GM12878 (cell line): ENCODE measurements at regions of chr5 and their contacts with region 1.

Region 1: GRCh38 chr5:158875272-158875679 is 224.4 kb downstream of the EBF1 start:
- DNase-seq: no peak
- ATAC-seq: peak; percentile 54
- H3K4me3 ChIP-seq: no peak overlapping the region
- H3K27ac ChIP-seq: peak overlapping the region; percentile 71
- H3K4me1 ChIP-seq: peaks cover 55% of the 10 kb centered on the region
- H3K27me3 ChIP-seq: no peaks in the 10 kb centered on the region
- CTCF ChIP-seq: no peak
- EP300 ChIP-seq: peak; percentile 60 to 64; a peak in 2 of 4 replicates
- POLR2A ChIP-seq: no peak
- RAD21 ChIP-seq: no peak

Region 2: GRCh38 chr5:158770506-158770905 is 104.8 kb before region 1 on chr5:
- CTCF ChIA-PET with region 1: interaction called, 4 read pairs
- POLR2A ChIA-PET with region 1: interaction called, 5 read pairs
- RAD21 ChIA-PET with region 1: interaction called, 37 read pairs
- SMC1A ChIA-PET with region 1: interaction called, 36 read pairs
- in situ Hi-C with region 1: no loop called
- intact Hi-C with region 1: loop called (anchors 2 kb)
- DNase-seq: no peak
- ATAC-seq: no peak
- H3K4me3 ChIP-seq: no peak overlapping the region
- H3K27ac ChIP-seq: no peak overlapping the region
- H3K4me1 ChIP-seq: peaks cover 4% of the 10 kb centered on the region; the same call in 1 of the 2 replicates
- H3K27me3 ChIP-seq: no peaks in the 10 kb centered on the region
- CTCF ChIP-seq: peak in 2 of 3 experiments; percentile 17 to 38; a peak in 2 of 6 replicates
- EP300 ChIP-seq: no peak
- POLR2A ChIP-seq: no peak
- RAD21 ChIP-seq: 0 out of 2 replicates have a peak, but pooled peaks have one; percentile 15

Region 3: DNA sequence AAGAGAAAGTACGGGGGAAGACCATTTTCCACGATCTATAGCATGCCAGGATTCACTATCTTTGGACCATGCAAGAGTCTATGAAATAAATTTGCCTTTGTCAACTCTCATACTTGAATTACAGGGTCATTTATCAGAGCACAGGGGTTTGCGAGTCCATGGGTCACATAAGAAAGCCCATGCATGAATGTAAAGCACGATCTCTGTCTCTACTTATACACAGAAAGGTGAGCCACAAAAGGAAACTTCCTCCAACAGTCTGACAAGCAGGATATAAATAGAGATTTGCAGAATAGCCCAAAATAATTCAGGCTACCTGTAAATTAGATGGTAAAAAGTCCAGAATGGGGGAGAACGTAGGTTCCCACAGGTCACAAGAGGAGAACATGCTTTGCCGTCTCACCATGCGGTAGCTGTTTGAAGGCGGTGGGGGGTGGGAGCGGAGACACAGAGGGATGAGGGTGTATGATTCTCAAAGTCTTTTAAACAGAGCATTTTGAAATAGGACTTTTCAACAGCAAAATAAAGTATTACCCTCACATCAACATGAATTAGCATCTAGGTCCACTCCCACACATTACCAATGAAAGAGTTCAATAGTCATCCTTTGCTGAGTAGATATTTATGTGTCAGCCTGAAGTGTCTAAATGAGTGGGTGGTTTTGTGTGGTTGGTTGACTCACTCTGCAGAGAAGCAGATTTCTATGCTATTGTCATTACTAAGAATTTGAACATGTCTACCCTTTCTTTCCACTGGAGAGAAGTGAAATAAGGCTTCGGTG is 55.2 kb before region 1 on chr5:
- CTCF ChIA-PET with region 1: interaction called, 7 read pairs
- POLR2A ChIA-PET with region 1: interaction called, 9 read pairs
- RAD21 ChIA-PET with region 1: interaction called, 77 read pairs
- SMC1A ChIA-PET with region 1: interaction called, 65 read pairs
- in situ Hi-C with region 1: no loop called
- intact Hi-C with region 1: loop called (anchors 2 kb)
- DNase-seq: peak; percentile 77
- ATAC-seq: peak; percentile 90
- H3K4me3 ChIP-seq: peak overlapping the region; percentile 53
- H3K27ac ChIP-seq: peak overlapping the region; percentile 83
- H3K4me1 ChIP-seq: peaks cover 50% of the 10 kb centered on the region
- H3K27me3 ChIP-seq: no peaks in the 10 kb centered on the region
- CTCF ChIP-seq: no peak
- EP300 ChIP-seq: peak in 1 of 2 experiments; percentile 5; a peak in 1 of 4 replicates
- POLR2A ChIP-seq: no peak
- RAD21 ChIP-seq: peak; percentile 10; the same call in 1 of the 2 replicates

Region 4: GRCh38 chr5:158898185-158899177 is 23.2 kb after region 1 on chr5:
- CTCF ChIA-PET with region 1: interaction called, 9 read pairs
- POLR2A ChIA-PET with region 1: interaction called, 7 read pairs
- RAD21 ChIA-PET with region 1: interaction called, 41 read pairs
- SMC1A ChIA-PET with region 1: interaction called, 131 read pairs
- in situ Hi-C with region 1: no loop called
- intact Hi-C with region 1: no loop called
- DNase-seq: no peak
- ATAC-seq: peak; percentile 82
- H3K4me3 ChIP-seq: 0 out of 2 replicates have a peak overlapping the region, but pooled peaks have one; percentile 15
- H3K27ac ChIP-seq: peak overlapping the region; percentile 83
- H3K4me1 ChIP-seq: peaks cover 14% of the 10 kb centered on the region
- H3K27me3 ChIP-seq: no peaks in the 10 kb centered on the region
- CTCF ChIP-seq: no peak
- EP300 ChIP-seq: peak; percentile 70 to 74; a peak in 3 of 4 replicates
- POLR2A ChIP-seq: no peak
- RAD21 ChIP-seq: no peak

Region 5: DNA sequence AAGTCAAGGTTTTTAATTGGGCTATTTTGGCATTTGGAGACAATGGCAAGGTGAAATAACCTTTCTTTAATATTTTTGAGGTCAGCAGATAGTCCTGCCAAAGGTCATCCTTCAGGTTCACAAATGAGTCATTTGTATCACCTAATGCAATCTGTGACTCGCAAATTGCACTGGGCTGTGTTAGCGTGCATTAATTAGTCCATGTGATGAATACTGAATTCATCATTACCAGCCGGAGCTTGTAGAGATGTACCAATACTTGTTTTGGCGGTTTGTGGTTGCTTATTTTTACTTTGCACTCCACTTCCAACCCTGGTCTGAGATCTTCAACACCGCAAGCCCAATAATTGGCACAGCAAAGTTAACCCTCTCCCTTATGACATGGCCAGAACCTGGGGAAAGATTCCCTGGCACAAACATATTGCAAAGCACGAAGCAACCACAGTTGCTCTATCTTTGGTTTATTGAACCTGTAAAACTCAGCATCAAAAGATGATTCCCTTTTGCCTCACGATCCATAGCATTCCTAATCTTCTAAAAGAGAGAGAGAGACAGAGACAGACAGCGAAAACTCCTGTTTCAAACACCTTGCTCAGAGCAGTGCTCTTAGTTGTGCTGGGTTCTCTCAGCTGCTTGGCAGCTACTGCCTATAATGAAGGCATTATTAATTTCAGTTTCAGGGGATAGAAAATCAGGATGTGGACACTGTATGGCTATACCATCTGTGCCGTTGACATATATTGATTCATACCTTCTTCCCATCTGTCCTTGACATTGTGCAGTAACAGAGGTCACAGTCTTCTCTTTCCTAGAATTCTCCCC is 46.4 kb after region 1 on chr5:
- CTCF ChIA-PET with region 1: interaction called, 10 read pairs
- POLR2A ChIA-PET with region 1: interaction called, 20 read pairs
- RAD21 ChIA-PET with region 1: interaction called, 35 read pairs
- SMC1A ChIA-PET with region 1: interaction called, 41 read pairs
- in situ Hi-C with region 1: no loop called
- intact Hi-C with region 1: loop called (anchors 1 kb)
- DNase-seq: peak; percentile 75
- ATAC-seq: peak; percentile 70
- H3K4me3 ChIP-seq: no peak overlapping the region
- H3K27ac ChIP-seq: peak overlapping the region; percentile 45
- H3K4me1 ChIP-seq: peaks cover 3% of the 10 kb centered on the region
- H3K27me3 ChIP-seq: no peaks in the 10 kb centered on the region
- CTCF ChIP-seq: no peak
- EP300 ChIP-seq: peak; percentile 91 to 98
- POLR2A ChIP-seq: no peak
- RAD21 ChIP-seq: no peak

Region 6: GRCh38 chr5:159100025-159100781 is 224.9 kb after region 1 on chr5:
- CTCF ChIA-PET with region 1: interaction called, 20 read pairs
- POLR2A ChIA-PET with region 1: interaction called, 18 read pairs
- RAD21 ChIA-PET with region 1: interaction called, 31 read pairs
- SMC1A ChIA-PET with region 1: interaction called, 29 read pairs
- in situ Hi-C with region 1: no loop called
- intact Hi-C with region 1: loop called (anchors 2 kb)
- DNase-seq: peak; percentile 81
- ATAC-seq: peak; percentile 58
- H3K4me3 ChIP-seq: peak overlapping the region; percentile 67
- H3K27ac ChIP-seq: peak overlapping the region; percentile 67
- H3K4me1 ChIP-seq: peaks cover 5% of the 10 kb centered on the region
- H3K27me3 ChIP-seq: no peaks in the 10 kb centered on the region
- CTCF ChIP-seq: no peak
- EP300 ChIP-seq: peak in 1 of 2 experiments; percentile 1; a peak in 2 of 4 replicates
- POLR2A ChIP-seq: peak; percentile 93
- RAD21 ChIP-seq: no peak